Heart left ventricle (tissue), 16 donors: ENCODE measurements at regions of chr2 and their contacts with region 1.

Region 1: DNA sequence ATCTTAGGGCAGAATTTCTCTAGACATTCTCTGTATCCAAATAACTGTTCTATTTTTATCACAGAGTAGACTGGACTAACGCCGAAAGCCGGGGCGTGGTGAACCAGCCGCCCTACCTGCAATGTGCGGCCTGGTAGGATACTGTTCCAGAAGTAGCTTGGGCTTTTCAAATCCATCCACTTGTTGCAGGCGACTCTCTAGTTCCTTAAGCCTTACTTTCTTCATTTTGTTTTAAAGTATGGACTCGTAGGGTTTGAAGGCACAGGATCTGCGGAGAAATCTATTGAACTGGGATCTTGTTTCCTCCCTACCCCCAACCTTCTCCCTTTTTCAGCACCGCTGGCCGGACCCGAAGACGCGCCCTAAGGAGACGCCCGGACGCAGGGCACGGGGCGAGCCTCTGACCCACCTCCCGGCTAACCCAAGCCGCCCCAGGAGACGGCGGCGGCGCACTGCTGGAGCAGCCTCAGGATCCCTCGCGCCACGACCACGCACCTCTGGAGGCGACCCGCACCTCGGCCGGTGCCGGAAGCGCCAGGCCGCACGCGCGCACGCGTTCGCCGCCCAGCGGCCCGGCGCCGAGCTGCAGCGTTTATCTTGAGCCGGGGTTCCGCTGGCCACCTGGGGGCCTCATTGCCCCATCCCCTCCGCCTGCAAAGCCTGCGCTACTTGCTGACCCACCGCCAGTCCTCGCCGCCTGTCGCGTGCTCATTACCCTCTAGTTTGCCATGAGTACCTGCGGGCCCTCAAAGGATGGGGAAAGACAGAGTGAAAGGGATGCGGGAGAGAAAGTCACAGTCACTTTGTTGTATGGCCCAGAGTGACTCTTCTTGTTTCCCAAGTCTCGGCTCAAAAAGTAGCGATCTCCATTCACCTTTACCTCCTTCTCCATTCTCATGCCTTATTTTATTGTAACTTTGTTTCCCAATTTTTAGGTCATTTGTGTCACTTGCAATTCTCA is at the start of gene METTL5:
- DNase-seq: peak; percentile 86 to 91 (median 87)
- ATAC-seq: peak; percentile 31 to 79 (median 62)
- H3K4me3 ChIP-seq: peak within 1 kb of the TSS; percentile 45 to 98 (median 85)
- H3K27ac ChIP-seq: peak within 1 kb of the TSS; percentile 37 to 91 (median 87)
- H3K4me1 ChIP-seq: peaks cover 0 to 52% (median 32%) of the 10 kb centered on the region in 12 donors
- H3K27me3 ChIP-seq: no peaks in the 10 kb centered on the region
- CTCF ChIP-seq: peak; percentile 91 to 100 (median 99)
- POLR2A ChIP-seq: peak in 1 of 2 donors; percentile 74
- total RNA-seq, gene METTL5: 50.8 to 73.5 (median 69.5) TPM

Region 2: GRCh38 chr2:169877398-169877797 is 52.7 kb after region 1 on chr2:
- intact Hi-C with region 1: loop called in 9 of 10 experiments (anchors 2 to 10 kb)
- DNase-seq: no peak
- ATAC-seq: peak in 2 of 4 donors; percentile 53 to 68
- H3K4me3 ChIP-seq: no peak overlapping the region
- H3K27ac ChIP-seq: no peak overlapping the region
- H3K4me1 ChIP-seq: no peaks in the 10 kb centered on the region
- H3K27me3 ChIP-seq: no peaks in the 10 kb centered on the region
- CTCF ChIP-seq: peak in 11 of 12 donors; percentile 10 to 55 (median 43)
- POLR2A ChIP-seq: no peak

Region 3: GRCh38 chr2:169928463-169928864 is 103.8 kb after region 1 on chr2:
- intact Hi-C with region 1: loop called (anchors 1 to 5 kb)
- DNase-seq: no peak
- ATAC-seq: no peak
- H3K4me3 ChIP-seq: no peak overlapping the region
- H3K27ac ChIP-seq: no peak overlapping the region
- H3K4me1 ChIP-seq: no peaks in the 10 kb centered on the region
- H3K27me3 ChIP-seq: no peaks in the 10 kb centered on the region
- CTCF ChIP-seq: peak; percentile 61 to 82 (median 74)
- POLR2A ChIP-seq: no peak